ENCODE measurements at regions of chr6 and their contacts with region 1.

Region 1: DNA sequence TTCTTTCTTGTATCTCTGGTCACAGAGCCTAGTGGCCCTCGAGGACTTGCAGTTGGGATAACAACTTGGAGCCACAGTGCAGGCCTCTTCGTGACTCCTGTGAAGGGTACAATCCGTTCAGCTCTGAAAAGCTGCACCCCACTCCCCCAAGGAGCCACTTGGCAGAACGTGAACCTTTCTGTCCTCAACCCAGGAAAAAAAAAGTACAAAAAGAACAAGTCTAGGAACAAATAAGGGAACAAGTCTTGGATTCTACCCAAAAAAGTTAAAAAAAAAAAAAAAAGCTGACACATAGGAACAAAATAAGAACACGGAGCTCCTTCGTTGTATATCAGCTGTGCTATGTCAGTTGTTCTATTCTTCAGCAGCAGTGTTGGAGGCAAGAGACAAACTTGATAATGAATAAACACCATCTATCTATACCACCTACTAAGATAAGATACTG is 77.9 kb upstream of the TULP1 start:
- DNase-seq: no peak
- ATAC-seq: no peak
- H3K4me3 ChIP-seq: no peak overlapping the region
- H3K4me3 Mint-ChIP-seq: no peak overlapping the region
- H3K27ac ChIP-seq: no peak overlapping the region
- H3K27ac Mint-ChIP-seq: peak overlapping the region; percentile 85
- H3K4me1 ChIP-seq: peaks cover 72% of the 10 kb centered on the region
- H3K4me1 Mint-ChIP-seq: peaks cover 93% of the 10 kb centered on the region
- H3K27me3 ChIP-seq: no peaks in the 10 kb centered on the region
- H3K27me3 Mint-ChIP-seq: no peaks in the 10 kb centered on the region
- CTCF ChIP-seq: no peak

Region 2: GRCh38 chr6:35496841-35497570 is 93.6 kb before region 1 on chr6 and contains the start of gene TEAD3:
- CTCF ChIA-PET with region 1: no interaction called
- POLR2A ChIA-PET with region 1: no interaction called
- intact Hi-C with region 1: no loop called
- DNase-seq: peak in 13 of 14 experiments; percentile 12 to 79 (median 40)
- ATAC-seq: peak; percentile 69
- H3K4me3 ChIP-seq: peak within 1 kb of the TSS; percentile 60
- H3K4me3 Mint-ChIP-seq: peak within 1 kb of the TSS; percentile 86
- H3K27ac ChIP-seq: no peak within 1 kb of the TSS
- H3K27ac Mint-ChIP-seq: peak within 1 kb of the TSS; percentile 39
- H3K4me1 ChIP-seq: peaks cover 29% of the 10 kb centered on the region
- H3K4me1 Mint-ChIP-seq: peaks cover 28% of the 10 kb centered on the region
- H3K27me3 ChIP-seq: peaks cover 3 to 14% of the 10 kb centered on the region in 2 experiments
- H3K27me3 Mint-ChIP-seq: peaks cover 25% of the 10 kb centered on the region
- CTCF ChIP-seq: no peak
- total RNA-seq, gene TEAD3: 0.11 TPM in 1 of 2 experiments, not detected in the other

Region 3: GRCh38 chr6:35601331-35602132 is 10.9 kb after region 1 on chr6:
- CTCF ChIA-PET with region 1: interaction called, 28 read pairs
- POLR2A ChIA-PET with region 1: interaction called, 181 read pairs
- intact Hi-C with region 1: loop called in 1 of 2 experiments (anchors 2 kb)
- DNase-seq: peak; percentile 50 to 93 (median 64)
- ATAC-seq: peak; percentile 74
- H3K4me3 ChIP-seq: peak overlapping the region; percentile 42
- H3K4me3 Mint-ChIP-seq: peak overlapping the region; percentile 82
- H3K27ac ChIP-seq: peak overlapping the region; percentile 52 to 82
- H3K27ac Mint-ChIP-seq: peak overlapping the region; percentile 85
- H3K4me1 ChIP-seq: peaks cover 70% of the 10 kb centered on the region
- H3K4me1 Mint-ChIP-seq: peaks cover 87% of the 10 kb centered on the region
- H3K27me3 ChIP-seq: no peaks in the 10 kb centered on the region
- H3K27me3 Mint-ChIP-seq: no peaks in the 10 kb centered on the region
- CTCF ChIP-seq: no peak

Region 4: DNA sequence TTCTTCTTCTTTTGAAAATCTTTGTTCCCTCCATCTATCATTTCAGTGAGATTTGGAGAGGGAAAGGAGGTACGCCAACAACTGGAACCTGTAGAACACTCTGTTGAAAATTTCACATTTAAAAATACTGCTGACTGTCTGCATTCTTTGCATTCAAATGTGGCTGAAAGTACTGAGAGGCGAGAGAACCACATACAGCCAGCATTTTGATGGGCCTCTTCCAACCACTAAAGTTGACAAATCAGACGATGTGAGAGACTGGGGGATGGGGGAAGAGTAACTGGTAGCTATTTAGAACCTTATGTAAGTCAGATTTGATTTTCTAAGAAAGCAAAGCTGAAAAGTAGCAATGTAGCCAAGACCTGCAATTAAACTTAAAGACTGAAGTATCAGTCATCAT is 20.6 kb after region 1 on chr6:
- CTCF ChIA-PET with region 1: interaction called, 8 read pairs
- POLR2A ChIA-PET with region 1: interaction called, 14 read pairs
- intact Hi-C with region 1: no loop called
- DNase-seq: peak in 4 of 14 experiments; percentile 55 to 65 (median 60)
- ATAC-seq: peak; percentile 80
- H3K4me3 ChIP-seq: no peak overlapping the region
- H3K4me3 Mint-ChIP-seq: peak overlapping the region; percentile 55
- H3K27ac ChIP-seq: peak overlapping the region in 1 of 2 donors; percentile 66
- H3K27ac Mint-ChIP-seq: peak overlapping the region; percentile 76
- H3K4me1 ChIP-seq: peaks cover 50% of the 10 kb centered on the region
- H3K4me1 Mint-ChIP-seq: peaks cover 91% of the 10 kb centered on the region
- H3K27me3 ChIP-seq: no peaks in the 10 kb centered on the region
- H3K27me3 Mint-ChIP-seq: no peaks in the 10 kb centered on the region
- CTCF ChIP-seq: no peak